ENCODE measurements at regions of chr1 and their contacts with region 1.

Region 1: GRCh38 chr1:9466780-9467758 is 72.2 kb upstream of the SLC25A33 start:
- DNase-seq: peak in 1 of 5 donors; percentile 49
- H3K4me3 ChIP-seq: no peak overlapping the region
- H3K27ac ChIP-seq: no peak overlapping the region
- H3K4me1 ChIP-seq: no peaks in the 10 kb centered on the region
- H3K27me3 ChIP-seq: no peaks in the 10 kb centered on the region
- CTCF ChIP-seq: no peak

Region 2: DNA sequence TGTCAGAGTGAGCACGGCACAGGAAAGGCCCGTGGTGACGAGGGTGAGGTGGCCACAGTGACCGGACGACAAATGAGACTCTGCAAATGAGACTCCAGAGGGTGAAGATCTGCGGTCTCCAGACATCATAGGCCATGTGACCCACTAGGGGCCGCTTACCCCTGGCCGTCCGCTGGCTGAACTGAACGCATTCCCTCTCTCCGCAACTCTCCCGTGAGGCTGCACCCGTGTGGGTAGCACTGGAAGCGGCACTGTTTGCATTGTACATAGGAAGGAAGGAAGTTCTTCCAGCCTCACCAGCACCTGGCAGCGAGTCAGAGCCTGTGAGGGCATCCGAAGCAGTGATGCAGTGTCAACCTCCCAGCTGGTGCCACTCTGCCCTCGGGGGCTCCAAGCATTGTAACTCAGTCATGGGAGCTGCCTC is 198.0 kb before region 1 on chr1:
- intact Hi-C with region 1: loop called (anchors 10 kb)
- DNase-seq: peak in 4 of 5 donors; percentile 64 to 81 (median 70)
- H3K4me3 ChIP-seq: no peak overlapping the region
- H3K27ac ChIP-seq: no peak overlapping the region
- H3K4me1 ChIP-seq: peaks cover 0 to 2% (median 0%) of the 10 kb centered on the region in 3 donors
- H3K27me3 ChIP-seq: no peaks in the 10 kb centered on the region
- CTCF ChIP-seq: no peak

Region 3: GRCh38 chr1:9520411-9520810 is 53.3 kb after region 1 on chr1:
- intact Hi-C with region 1: no loop called
- DNase-seq: no peak
- H3K4me3 ChIP-seq: no peak overlapping the region
- H3K27ac ChIP-seq: no peak overlapping the region
- H3K4me1 ChIP-seq: no peaks in the 10 kb centered on the region
- H3K27me3 ChIP-seq: no peaks in the 10 kb centered on the region
- CTCF ChIP-seq: no peak

Region 4: DNA sequence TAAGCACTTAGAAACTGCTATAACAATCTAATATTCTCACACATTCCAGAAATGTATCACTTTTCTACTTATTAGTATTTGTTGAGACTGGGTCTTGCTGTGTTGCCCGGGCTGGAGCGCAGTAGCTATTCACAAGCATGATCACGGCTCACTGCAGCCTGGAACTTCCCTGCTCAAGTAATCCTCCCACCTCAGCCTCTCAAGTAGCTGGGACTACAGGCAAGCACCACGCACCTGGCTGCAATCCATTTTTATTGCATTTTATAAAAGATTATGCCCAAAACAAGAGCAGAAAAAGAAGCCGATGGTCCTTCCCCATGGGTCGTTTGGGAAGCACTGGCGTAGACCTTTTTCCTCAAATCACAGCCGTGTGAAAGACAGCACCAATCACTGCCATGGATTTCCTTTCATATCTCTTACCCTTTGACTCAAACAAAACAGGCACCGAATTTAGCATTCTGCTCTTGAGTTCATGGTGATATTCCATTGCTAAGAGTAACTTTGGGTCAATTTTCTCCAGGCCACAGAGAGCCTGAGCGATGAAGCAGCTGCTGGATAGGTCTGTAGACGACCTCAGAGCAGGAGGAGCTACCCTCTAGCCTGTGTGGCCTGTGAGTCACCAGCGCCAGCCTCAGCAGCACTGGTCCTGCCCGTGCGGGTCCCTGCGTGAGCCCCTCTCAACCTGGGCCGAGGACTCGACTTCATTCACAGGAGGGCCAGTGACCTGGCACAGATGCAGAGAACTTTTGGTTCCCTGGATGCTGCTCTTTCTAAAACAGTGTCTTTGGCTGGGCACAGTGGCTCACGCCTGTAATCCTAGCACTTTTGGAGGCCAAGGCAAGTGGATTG is 265.3 kb after region 1 on chr1:
- intact Hi-C with region 1: no loop called
- DNase-seq: peak in 1 of 5 donors; percentile 59
- H3K4me3 ChIP-seq: no peak overlapping the region
- H3K27ac ChIP-seq: no peak overlapping the region
- H3K4me1 ChIP-seq: no peaks in the 10 kb centered on the region
- H3K27me3 ChIP-seq: no peaks in the 10 kb centered on the region
- CTCF ChIP-seq: no peak